Endothelial cell of umbilical vein (primary cell): ENCODE measurements at regions of chr9 and their contacts with region 1.

Region 1: GRCh38 chr9:21395778-21396717 is 10.8 kb upstream of the IFNA2 start:
- DNase-seq: peak; percentile 45
- H3K4me3 ChIP-seq: peak overlapping the region in 2 of 3 experiments; percentile 30 to 32
- H3K27ac ChIP-seq: no peak overlapping the region
- H3K4me1 ChIP-seq: no peaks in the 10 kb centered on the region
- H3K27me3 ChIP-seq: peaks cover 31 to 78% of the 10 kb centered on the region in 2 experiments
- CTCF ChIP-seq: peak; percentile 88 to 93
- POLR2A ChIP-seq: no peak

Region 2: GRCh38 chr9:21154018-21154608 is 241.9 kb before region 1 on chr9:
- CTCF ChIA-PET with region 1: interaction called, 10 read pairs
- POLR2A ChIA-PET with region 1: no interaction called
- dilution Hi-C with region 1: no loop called
- intact Hi-C with region 1: no loop called
- DNase-seq: peak; percentile 58
- H3K4me3 ChIP-seq: no peak overlapping the region
- H3K27ac ChIP-seq: no peak overlapping the region
- H3K4me1 ChIP-seq: peaks cover 8% of the 10 kb centered on the region
- H3K27me3 ChIP-seq: no peaks in the 10 kb centered on the region
- CTCF ChIP-seq: peak in 1 of 2 donors; percentile 10
- POLR2A ChIP-seq: no peak

Region 3: DNA sequence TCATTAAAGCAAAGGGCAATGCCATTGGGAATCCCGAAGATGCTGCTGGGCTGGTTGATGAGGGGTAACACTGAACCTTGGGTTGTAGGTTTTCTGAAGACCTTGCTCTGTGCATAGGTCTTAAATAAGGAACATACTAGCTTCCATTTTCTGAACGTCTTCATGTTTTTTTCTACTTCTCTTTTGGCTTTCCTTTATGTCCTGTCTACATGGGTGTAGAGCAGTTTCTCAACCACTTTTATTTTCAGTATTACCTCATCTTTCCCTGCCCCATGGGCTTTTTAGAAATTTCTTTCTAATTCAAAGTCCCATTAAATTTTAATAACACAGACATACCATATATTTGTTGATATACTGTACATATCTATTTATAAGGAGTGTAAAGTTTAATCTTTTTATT is 156.1 kb before region 1 on chr9 and contains the start of gene IFNA14:
- CTCF ChIA-PET with region 1: interaction called, 63 read pairs
- POLR2A ChIA-PET with region 1: no interaction called
- dilution Hi-C with region 1: no loop called
- intact Hi-C with region 1: loop called (anchors 2 kb)
- DNase-seq: no peak
- H3K4me3 ChIP-seq: no peak within 1 kb of the TSS
- H3K27ac ChIP-seq: no peak within 1 kb of the TSS
- H3K4me1 ChIP-seq: no peaks in the 10 kb centered on the region
- H3K27me3 ChIP-seq: peaks cover 11 to 28% of the 10 kb centered on the region in 2 experiments
- CTCF ChIP-seq: no peak
- POLR2A ChIP-seq: no peak
- total RNA-seq, gene IFNA14: not detected in 2 replicates

Region 4: GRCh38 chr9:21317956-21318923 is 77.8 kb before region 1 on chr9:
- CTCF ChIA-PET with region 1: interaction called, 62 read pairs
- POLR2A ChIA-PET with region 1: no interaction called
- dilution Hi-C with region 1: no loop called
- intact Hi-C with region 1: loop called (anchors 1 kb)
- DNase-seq: peak; percentile 76
- H3K4me3 ChIP-seq: no peak overlapping the region
- H3K27ac ChIP-seq: peak overlapping the region; percentile 20
- H3K4me1 ChIP-seq: peaks cover 13% of the 10 kb centered on the region
- H3K27me3 ChIP-seq: peaks cover 10 to 22% of the 10 kb centered on the region in 2 experiments
- CTCF ChIP-seq: peak; percentile 37 to 61
- POLR2A ChIP-seq: no peak

Region 5: GRCh38 chr9:21334701-21335632 is 61.1 kb before region 1 on chr9 and contains the start of gene KLHL9:
- CTCF ChIA-PET with region 1: interaction called, 37 read pairs
- POLR2A ChIA-PET with region 1: no interaction called
- dilution Hi-C with region 1: no loop called
- intact Hi-C with region 1: no loop called
- DNase-seq: peak; percentile 91
- H3K4me3 ChIP-seq: peak within 1 kb of the TSS; percentile 60 to 96 (median 95)
- H3K27ac ChIP-seq: peak within 1 kb of the TSS; percentile 94
- H3K4me1 ChIP-seq: peaks cover 35% of the 10 kb centered on the region
- H3K27me3 ChIP-seq: peaks cover 8 to 12% of the 10 kb centered on the region in 2 experiments
- CTCF ChIP-seq: no peak
- POLR2A ChIP-seq: peak; percentile 74
- total RNA-seq, gene KLHL9: 23.5 and 23.6 TPM in 2 replicates

Region 6: GRCh38 chr9:21381448-21382339 is 14.4 kb before region 1 on chr9:
- CTCF ChIA-PET with region 1: interaction called, 37 read pairs
- POLR2A ChIA-PET with region 1: no interaction called
- dilution Hi-C with region 1: no loop called
- intact Hi-C with region 1: no loop called
- DNase-seq: no peak
- H3K4me3 ChIP-seq: no peak overlapping the region
- H3K27ac ChIP-seq: no peak overlapping the region
- H3K4me1 ChIP-seq: no peaks in the 10 kb centered on the region
- H3K27me3 ChIP-seq: peaks cover 10 to 76% of the 10 kb centered on the region in 2 experiments
- CTCF ChIP-seq: no peak
- POLR2A ChIP-seq: no peak

Region 7: DNA sequence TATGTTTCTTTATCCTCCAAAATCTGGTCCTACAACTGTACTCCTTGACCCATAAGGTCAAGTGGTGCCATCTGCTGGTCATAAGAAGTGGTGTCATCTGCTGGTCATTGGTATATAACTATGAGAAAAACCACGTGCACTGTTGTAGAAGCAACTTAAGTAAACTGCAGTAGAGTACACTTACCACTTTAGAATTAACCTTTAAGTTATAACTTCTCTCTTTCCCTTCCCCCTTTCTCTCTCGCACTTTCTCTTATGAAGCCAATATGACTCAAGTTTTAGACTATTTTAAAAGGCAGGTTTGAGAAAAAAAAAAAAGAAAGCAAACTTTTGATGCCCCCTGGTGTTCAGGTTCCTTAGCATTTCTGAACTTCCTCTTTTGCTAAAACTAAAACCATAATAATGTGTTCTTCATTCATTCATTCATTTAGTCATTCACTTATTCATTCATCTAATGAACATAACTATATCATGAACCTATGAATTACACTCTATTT is 393.5 kb after region 1 on chr9:
- CTCF ChIA-PET with region 1: no interaction called
- POLR2A ChIA-PET with region 1: no interaction called
- dilution Hi-C with region 1: no loop called
- intact Hi-C with region 1: no loop called
- DNase-seq: peak; percentile 85
- H3K4me3 ChIP-seq: peak overlapping the region in 1 of 3 experiments; percentile 69
- H3K27ac ChIP-seq: no peak overlapping the region
- H3K4me1 ChIP-seq: no peaks in the 10 kb centered on the region
- H3K27me3 ChIP-seq: peaks cover 5 to 23% of the 10 kb centered on the region in 2 experiments
- CTCF ChIP-seq: peak; percentile 45 to 57
- POLR2A ChIP-seq: no peak